HCT116 (cell line): ENCODE measurements at regions of chr7 and their contacts with region 1.

Region 1: GRCh38 chr7:130875265-130875741 is 141.3 kb upstream of the KLF14 start:
- DNase-seq: no peak
- ATAC-seq: peak; percentile 68
- H3K4me3 ChIP-seq: no peak overlapping the region
- H3K27ac ChIP-seq: peak overlapping the region; percentile 100
- H3K4me1 ChIP-seq: peaks cover 69 to 97% of the 10 kb centered on the region in 2 experiments
- H3K27me3 ChIP-seq: no peaks in the 10 kb centered on the region
- CTCF ChIP-seq: peak; percentile 82 to 95 (median 85)
- POLR2A ChIP-seq: no peak
- RAD21 ChIP-seq: peak; percentile 86

Region 2: GRCh38 chr7:130741331-130741995 is 133.8 kb before region 1 on chr7:
- CTCF ChIA-PET with region 1: no interaction called
- POLR2A ChIA-PET with region 1: no interaction called
- RAD21 ChIA-PET with region 1: no interaction called
- intact Hi-C with region 1: no loop called
- DNase-seq: no peak
- ATAC-seq: no peak
- H3K4me3 ChIP-seq: no peak overlapping the region
- H3K27ac ChIP-seq: no peak overlapping the region
- H3K4me1 ChIP-seq: no peaks in the 10 kb centered on the region
- H3K27me3 ChIP-seq: peaks cover 17% of the 10 kb centered on the region
- CTCF ChIP-seq: no peak
- POLR2A ChIP-seq: no peak
- RAD21 ChIP-seq: no peak

Region 3: GRCh38 chr7:131040467-131040932 is 165.2 kb after region 1 on chr7:
- CTCF ChIA-PET with region 1: interaction called, 4 read pairs
- POLR2A ChIA-PET with region 1: no interaction called
- RAD21 ChIA-PET with region 1: interaction called in 1 of 2 experiments, 3 read pairs
- intact Hi-C with region 1: loop called (anchors 2 kb)
- DNase-seq: peak; percentile 73
- ATAC-seq: peak; percentile 79
- H3K4me3 ChIP-seq: no peak overlapping the region
- H3K27ac ChIP-seq: peak overlapping the region; percentile 65
- H3K4me1 ChIP-seq: peaks cover 56 to 63% of the 10 kb centered on the region in 2 experiments
- H3K27me3 ChIP-seq: no peaks in the 10 kb centered on the region
- CTCF ChIP-seq: peak; percentile 85 to 96 (median 90)
- POLR2A ChIP-seq: no peak
- RAD21 ChIP-seq: peak; percentile 99